B cell (primary cell): ENCODE measurements at regions of chr2 and their contacts with region 1.

Region 1: DNA sequence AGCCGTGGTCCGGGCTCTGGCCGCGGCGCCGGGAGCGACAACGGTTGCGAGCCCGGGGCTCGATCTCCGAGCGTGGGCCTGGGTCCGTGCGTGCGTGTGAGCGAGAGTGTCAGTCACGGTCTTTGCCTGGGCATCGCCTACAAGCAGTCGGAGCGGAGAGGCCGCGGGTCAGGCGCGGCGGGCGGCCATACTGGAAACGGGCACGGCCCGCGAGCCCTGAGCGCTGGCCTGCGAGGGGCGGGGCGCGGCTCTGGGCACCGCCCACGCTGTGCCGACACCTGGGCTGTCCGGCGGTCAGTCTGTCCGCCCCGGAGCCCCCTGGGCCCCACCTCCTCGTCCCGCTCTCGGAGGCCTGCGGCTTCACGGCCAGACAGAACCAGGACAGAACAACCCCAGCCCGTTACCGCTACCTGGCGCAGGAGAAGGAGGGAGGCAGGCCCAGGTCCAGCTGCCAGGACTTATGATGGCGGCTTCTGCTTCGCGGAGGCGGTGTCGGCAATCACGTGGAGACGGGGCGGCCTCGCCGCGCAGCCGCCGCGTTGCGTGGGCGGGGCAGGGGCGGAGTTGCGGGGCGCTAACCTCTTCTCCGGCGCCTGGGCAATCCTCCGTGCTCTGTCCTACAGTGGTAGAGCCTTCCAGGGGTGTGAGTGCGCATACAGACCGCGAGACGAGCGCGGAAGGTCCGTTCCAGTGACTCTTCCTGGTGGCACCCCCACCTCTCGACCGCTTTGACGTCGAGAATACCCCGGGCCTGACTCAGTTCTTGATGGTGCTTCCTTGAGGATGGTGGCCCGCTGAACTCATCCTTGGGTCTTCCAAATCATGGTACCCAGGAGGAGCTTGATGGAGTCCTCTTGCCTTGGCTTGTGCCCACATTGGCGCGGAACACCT is at the start of gene TMEM131:
- DNase-seq: peak; percentile 98
- ATAC-seq: peak; percentile 81
- H3K4me3 ChIP-seq: peak within 1 kb of the TSS; percentile 63 to 89 (median 82)
- H3K4me3 Mint-ChIP-seq: peak within 1 kb of the TSS; percentile 93
- H3K27ac ChIP-seq: peak within 1 kb of the TSS; percentile 82 to 93
- H3K27ac Mint-ChIP-seq: peak within 1 kb of the TSS; percentile 96
- H3K4me1 ChIP-seq: peaks cover 31 to 32% of the 10 kb centered on the region in 2 donors
- H3K4me1 Mint-ChIP-seq: peaks cover 41% of the 10 kb centered on the region
- H3K27me3 ChIP-seq: no peaks in the 10 kb centered on the region
- H3K27me3 Mint-ChIP-seq: no peaks in the 10 kb centered on the region
- CTCF ChIP-seq: no peak
- total RNA-seq, gene TMEM131: 101 and 102 TPM in 2 replicates

Region 2: DNA sequence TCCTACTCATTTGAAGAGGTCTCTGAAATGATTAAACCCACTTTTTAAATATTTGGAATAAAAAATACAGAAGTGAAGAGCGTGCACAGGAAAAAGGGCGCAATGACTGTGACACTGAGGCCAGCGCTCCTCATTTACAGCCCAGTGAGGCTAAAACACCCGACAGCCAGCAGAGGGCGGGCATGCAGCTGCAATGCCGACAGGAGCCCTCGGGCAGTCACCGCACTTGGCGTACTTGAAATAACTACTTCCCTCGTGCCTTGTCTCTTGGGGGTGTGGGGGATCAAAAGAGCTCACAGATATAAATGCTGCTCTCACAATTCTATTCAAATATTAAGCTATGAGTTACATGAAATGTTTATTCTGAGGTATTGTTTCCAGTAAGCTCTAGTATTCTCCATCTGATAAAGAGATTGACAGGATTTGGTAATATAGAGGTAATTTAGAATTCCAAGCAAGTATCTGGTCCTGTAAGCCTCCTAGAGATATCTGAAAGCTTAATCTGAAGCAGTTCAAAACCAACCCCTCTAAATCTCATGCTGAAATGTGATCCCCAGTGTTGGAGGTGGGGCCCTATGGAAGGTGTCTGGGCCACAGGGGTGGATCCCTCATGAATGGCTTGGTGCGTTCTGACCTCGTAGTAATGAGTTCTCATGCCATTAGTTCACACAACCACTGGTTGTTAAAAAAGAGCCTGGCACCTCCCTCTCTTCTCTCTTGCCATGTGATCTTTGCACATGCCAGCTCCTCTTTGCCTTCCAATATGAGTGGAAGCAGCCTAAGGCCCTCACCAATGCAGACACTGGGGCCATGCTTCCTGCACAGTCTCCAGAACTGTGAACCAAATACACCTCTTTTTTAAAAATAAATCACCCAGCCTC is 189.0 kb before region 1 on chr2:
- CTCF ChIA-PET with region 1: interaction called, 8 read pairs
- POLR2A ChIA-PET with region 1: interaction called, 3 read pairs
- intact Hi-C with region 1: loop called (anchors 1 kb)
- DNase-seq: peak; percentile 86
- ATAC-seq: peak; percentile 97
- H3K4me3 ChIP-seq: no peak overlapping the region
- H3K4me3 Mint-ChIP-seq: no peak overlapping the region
- H3K27ac ChIP-seq: peak overlapping the region in 1 of 2 donors; percentile 56
- H3K27ac Mint-ChIP-seq: no peak overlapping the region
- H3K4me1 ChIP-seq: peaks cover 4 to 7% of the 10 kb centered on the region in 2 donors
- H3K4me1 Mint-ChIP-seq: no peaks in the 10 kb centered on the region
- H3K27me3 ChIP-seq: no peaks in the 10 kb centered on the region
- H3K27me3 Mint-ChIP-seq: no peaks in the 10 kb centered on the region
- CTCF ChIP-seq: peak; percentile 97

Region 3: GRCh38 chr2:97935719-97936161 is 60.2 kb before region 1 on chr2:
- CTCF ChIA-PET with region 1: no interaction called
- POLR2A ChIA-PET with region 1: no interaction called
- intact Hi-C with region 1: loop called (anchors 1 kb)
- DNase-seq: no peak
- ATAC-seq: no peak
- H3K4me3 ChIP-seq: no peak overlapping the region
- H3K4me3 Mint-ChIP-seq: peak overlapping the region; percentile 66
- H3K27ac ChIP-seq: peak overlapping the region; percentile 2 to 70
- H3K27ac Mint-ChIP-seq: peak overlapping the region; percentile 64
- H3K4me1 ChIP-seq: peaks cover 52 to 64% of the 10 kb centered on the region in 2 donors
- H3K4me1 Mint-ChIP-seq: peaks cover 91% of the 10 kb centered on the region
- H3K27me3 ChIP-seq: no peaks in the 10 kb centered on the region
- H3K27me3 Mint-ChIP-seq: no peaks in the 10 kb centered on the region
- CTCF ChIP-seq: no peak

Region 4: DNA sequence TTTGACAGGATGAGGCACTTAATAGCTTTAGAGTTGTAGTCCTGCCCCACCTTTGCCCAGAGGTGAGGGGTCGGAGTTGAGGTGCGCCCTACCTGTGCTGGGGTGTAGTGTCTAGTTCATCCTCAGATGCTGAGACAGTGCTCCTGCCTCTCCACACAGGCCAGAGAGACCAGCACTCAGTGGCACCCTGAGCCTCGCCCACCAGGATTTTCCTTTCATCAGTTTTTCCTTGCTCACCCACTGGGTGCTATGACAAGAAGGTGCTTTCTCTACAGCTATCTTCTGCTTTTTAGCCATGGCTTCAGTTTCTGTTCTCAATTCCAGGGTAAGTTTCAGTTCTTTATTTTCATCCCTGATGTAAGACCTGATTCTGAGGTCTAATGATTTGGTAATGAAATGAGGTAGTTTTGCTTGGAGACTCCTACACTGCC is 16.6 kb after region 1 on chr2:
- CTCF ChIA-PET with region 1: interaction called, 8 read pairs
- POLR2A ChIA-PET with region 1: interaction called, 5 read pairs
- intact Hi-C with region 1: loop called (anchors 1 kb)
- DNase-seq: peak; percentile 91
- ATAC-seq: peak; percentile 86
- H3K4me3 ChIP-seq: peak overlapping the region in 4 of 5 experiments; percentile 9 to 55 (median 30)
- H3K4me3 Mint-ChIP-seq: peak overlapping the region; percentile 78
- H3K27ac ChIP-seq: peak overlapping the region; percentile 90 to 94
- H3K27ac Mint-ChIP-seq: peak overlapping the region; percentile 98
- H3K4me1 ChIP-seq: peaks cover 68 to 76% of the 10 kb centered on the region in 2 donors
- H3K4me1 Mint-ChIP-seq: peaks cover 66% of the 10 kb centered on the region
- H3K27me3 ChIP-seq: no peaks in the 10 kb centered on the region
- H3K27me3 Mint-ChIP-seq: no peaks in the 10 kb centered on the region
- CTCF ChIP-seq: no peak

Region 5: DNA sequence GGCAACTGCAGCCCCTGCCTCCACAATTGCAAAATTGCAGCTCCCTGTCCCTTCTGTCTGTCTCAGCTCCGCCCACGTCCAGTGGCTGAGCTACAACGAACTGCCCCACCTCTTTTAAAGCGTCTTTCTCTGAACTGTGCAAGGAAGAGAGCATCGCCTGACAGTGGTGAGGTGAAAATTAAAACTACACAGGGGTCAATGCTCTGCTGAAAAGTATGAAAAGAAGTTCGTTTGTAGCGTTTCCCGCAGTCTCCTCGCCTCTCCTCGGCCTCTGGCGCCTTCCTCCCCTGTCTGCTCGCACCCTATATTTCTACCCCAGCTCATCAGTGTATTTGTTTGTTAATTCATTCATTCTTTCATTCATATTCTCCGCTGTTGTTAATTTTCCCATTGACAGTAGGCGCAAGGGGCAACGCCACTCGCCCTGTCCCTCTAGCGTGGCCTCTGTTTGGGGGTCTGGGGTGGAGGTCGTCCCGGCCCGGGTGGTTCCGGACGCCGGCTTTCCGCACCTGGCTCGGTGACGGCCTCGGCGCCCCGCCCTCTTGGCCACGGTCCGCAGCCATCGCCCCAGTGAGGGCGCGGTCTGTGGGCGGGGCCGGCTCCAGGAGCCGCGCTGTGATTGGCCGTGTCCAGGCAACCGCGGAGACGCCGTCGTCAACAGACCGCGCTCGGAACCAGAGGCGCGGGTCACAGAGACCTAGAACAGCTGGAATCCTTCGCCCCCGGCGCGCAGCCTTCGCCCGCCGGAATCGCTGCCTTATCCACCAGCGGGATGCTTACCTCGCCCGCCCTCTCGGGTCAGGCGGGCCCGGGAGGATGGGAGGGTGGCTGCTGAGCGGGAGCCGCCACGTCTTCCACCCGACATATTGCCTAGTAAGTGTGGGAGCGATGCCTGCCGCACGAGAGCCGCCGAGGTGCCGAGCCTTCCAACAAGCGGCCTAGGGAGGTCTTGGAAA is 90.8 kb after region 1 on chr2 and contains the start of gene VWA3B:
- CTCF ChIA-PET with region 1: no interaction called
- POLR2A ChIA-PET with region 1: interaction called, 3 read pairs
- intact Hi-C with region 1: loop called (anchors 1 kb)
- DNase-seq: peak; percentile 90
- ATAC-seq: peak; percentile 92
- H3K4me3 ChIP-seq: peak within 1 kb of the TSS; percentile 55 to 67 (median 57)
- H3K4me3 Mint-ChIP-seq: peak within 1 kb of the TSS; percentile 79
- H3K27ac ChIP-seq: peak within 1 kb of the TSS; percentile 33 to 54
- H3K27ac Mint-ChIP-seq: peak within 1 kb of the TSS; percentile 75
- H3K4me1 ChIP-seq: peaks cover 29 to 49% of the 10 kb centered on the region in 2 donors
- H3K4me1 Mint-ChIP-seq: peaks cover 47% of the 10 kb centered on the region
- H3K27me3 ChIP-seq: no peaks in the 10 kb centered on the region
- H3K27me3 Mint-ChIP-seq: no peaks in the 10 kb centered on the region
- CTCF ChIP-seq: no peak
- total RNA-seq, gene VWA3B: not detected in 2 replicates

Region 6: DNA sequence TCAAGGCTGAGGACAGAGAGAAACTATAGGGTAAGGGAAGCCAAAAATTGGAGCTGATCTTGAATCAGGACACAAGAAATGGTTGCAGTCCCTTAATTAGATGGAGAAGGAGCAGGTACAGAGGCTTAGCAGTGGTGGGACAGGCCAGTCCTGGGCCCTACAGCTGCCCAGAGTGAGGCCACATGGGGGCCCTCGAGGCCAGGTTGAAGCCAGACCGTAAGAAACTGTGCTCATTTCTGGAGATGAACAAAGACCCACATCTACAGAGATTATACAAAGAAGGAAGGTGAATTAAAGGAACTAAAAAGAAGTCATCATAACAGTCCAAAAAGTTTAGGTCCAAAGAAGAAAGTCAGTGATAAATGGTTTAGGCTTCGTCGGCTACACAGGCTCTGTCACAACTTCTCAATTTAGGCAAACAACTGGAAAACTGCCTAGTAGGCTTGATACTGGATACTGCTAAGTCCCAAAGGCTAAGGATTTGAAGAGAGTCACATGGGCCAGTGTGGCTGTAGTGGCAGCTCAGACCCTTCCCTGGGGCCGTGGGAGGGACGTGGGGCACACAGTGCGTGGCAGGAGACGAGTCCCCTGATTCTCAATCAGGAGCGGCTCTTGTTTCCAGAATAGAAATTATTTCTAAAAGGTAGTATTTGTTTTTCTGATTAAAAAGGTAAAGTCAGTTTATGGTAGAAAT is 299.9 kb after region 1 on chr2:
- CTCF ChIA-PET with region 1: no interaction called
- POLR2A ChIA-PET with region 1: no interaction called
- intact Hi-C with region 1: no loop called
- DNase-seq: no peak
- ATAC-seq: no peak
- H3K4me3 ChIP-seq: no peak overlapping the region
- H3K4me3 Mint-ChIP-seq: no peak overlapping the region
- H3K27ac ChIP-seq: no peak overlapping the region
- H3K27ac Mint-ChIP-seq: no peak overlapping the region
- H3K4me1 ChIP-seq: no peaks in the 10 kb centered on the region
- H3K4me1 Mint-ChIP-seq: no peaks in the 10 kb centered on the region
- H3K27me3 ChIP-seq: no peaks in the 10 kb centered on the region
- H3K27me3 Mint-ChIP-seq: peaks cover 47% of the 10 kb centered on the region
- CTCF ChIP-seq: no peak